H1 (cell line): ENCODE measurements at regions of chr6 and their contacts with region 1.

Region 1: DNA sequence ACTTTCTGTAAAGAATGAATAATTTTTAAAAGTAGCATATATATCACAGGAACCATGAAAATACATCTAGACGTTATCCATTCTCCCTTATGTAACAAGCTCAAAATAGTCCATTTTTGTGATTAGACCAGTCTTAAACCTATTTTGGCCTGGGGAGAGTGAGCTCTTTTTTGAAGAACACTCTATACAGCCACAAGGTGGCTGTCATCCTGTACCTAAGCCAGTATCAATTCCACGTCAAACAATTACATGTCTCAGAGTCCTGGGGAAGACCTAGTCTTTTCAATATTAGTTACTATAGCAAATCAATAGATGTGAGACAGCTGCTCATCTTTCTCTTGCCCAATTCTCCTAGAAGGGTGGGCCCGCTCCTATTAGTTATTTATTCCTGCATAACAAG is 28.4 kb downstream of the FBXO5 start:
- DNase-seq: no peak
- H3K4me3 ChIP-seq: no peak overlapping the region
- H3K27ac ChIP-seq: no peak overlapping the region
- H3K4me1 ChIP-seq: peaks cover 0 to 4% (median 0%) of the 10 kb centered on the region in 4 experiments; a peak in 1 of 7 replicates
- H3K27me3 ChIP-seq: no peaks in the 10 kb centered on the region
- CTCF ChIP-seq: 0 out of 4 replicates have a peak, but pooled peaks of 1 of the 3 experiments have one; percentile 7
- EP300 ChIP-seq: no peak
- POLR2A ChIP-seq: no peak
- RAD21 ChIP-seq: peak in 1 of 2 experiments; percentile 15; a peak in 1 of 4 replicates

Region 2: DNA sequence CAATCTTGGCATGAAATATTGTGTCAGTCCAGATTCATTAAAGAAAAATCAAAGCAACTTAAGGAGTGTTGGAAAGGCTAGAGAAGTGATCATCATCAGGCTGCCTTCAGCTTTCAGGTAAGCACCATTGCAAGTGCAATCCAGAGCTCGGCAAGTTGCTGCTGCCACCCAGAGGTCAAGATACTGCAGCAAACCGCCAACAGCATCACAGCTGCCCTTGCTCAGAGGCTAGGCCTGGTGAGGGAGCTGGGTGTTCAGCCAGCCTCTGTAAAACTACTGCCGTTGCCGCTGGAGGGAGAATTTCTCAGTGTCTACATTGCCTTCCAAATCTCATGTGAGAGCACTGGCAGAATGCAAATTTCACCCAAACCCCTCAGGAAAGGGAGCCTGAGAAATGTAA is 311.5 kb before region 1 on chr6:
- CTCF ChIA-PET with region 1: no interaction called
- POLR2A ChIA-PET with region 1: no interaction called
- DNase-seq: peak; percentile 60 to 61
- H3K4me3 ChIP-seq: no peak overlapping the region
- H3K27ac ChIP-seq: no peak overlapping the region
- H3K4me1 ChIP-seq: no peaks in the 10 kb centered on the region
- H3K27me3 ChIP-seq: peaks cover 2 to 10% (median 6%) of the 10 kb centered on the region in 4 experiments; a peak in 6 of 7 replicates
- CTCF ChIP-seq: peak; percentile 84 to 93 (median 91)
- EP300 ChIP-seq: no peak
- POLR2A ChIP-seq: no peak
- RAD21 ChIP-seq: peak; percentile 89 to 90

Region 3: DNA sequence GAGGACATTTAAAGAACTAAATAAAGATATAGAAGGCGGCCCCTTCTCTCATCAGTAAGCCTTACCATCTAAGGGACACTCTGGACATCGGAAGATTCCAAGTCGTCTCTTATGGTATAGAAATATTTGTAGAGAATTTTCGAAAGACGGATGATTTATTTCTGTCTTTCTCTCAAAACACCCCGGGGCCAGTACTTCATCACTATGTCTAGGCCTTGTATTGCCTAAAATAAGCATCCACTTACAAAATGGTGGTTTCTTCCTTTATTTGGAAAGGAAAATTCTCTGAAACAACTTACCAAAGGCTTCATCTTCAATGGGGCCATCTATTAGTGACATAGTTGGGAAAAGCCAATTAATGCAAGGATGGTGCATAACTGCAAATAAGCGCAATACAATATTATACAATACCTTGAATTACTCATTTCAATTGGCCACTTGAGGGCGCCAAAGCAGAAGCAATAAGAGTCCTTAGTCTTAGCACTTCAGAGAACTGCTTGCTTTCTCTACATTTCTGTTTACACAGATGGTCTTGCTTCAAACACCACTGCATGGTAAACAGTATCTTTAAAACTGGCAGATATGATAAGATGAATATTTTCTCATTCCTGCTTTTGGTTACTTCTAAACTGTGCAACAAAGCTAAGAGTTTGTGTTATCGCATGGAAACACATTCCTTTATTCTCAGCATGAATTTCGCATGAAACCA is 90.7 kb before region 1 on chr6:
- CTCF ChIA-PET with region 1: interaction called, 71 read pairs
- POLR2A ChIA-PET with region 1: no interaction called
- DNase-seq: peak in 1 of 2 experiments; percentile 65
- H3K4me3 ChIP-seq: no peak overlapping the region
- H3K27ac ChIP-seq: no peak overlapping the region
- H3K4me1 ChIP-seq: no peaks in the 10 kb centered on the region
- H3K27me3 ChIP-seq: no peaks in the 10 kb centered on the region
- CTCF ChIP-seq: peak in 2 of 3 experiments; percentile 67 to 72; a peak in 3 of 4 replicates
- EP300 ChIP-seq: no peak
- POLR2A ChIP-seq: no peak
- RAD21 ChIP-seq: peak; percentile 92 to 93